ENCODE measurements at regions of chr1 and their contacts with region 1.

Region 1: DNA sequence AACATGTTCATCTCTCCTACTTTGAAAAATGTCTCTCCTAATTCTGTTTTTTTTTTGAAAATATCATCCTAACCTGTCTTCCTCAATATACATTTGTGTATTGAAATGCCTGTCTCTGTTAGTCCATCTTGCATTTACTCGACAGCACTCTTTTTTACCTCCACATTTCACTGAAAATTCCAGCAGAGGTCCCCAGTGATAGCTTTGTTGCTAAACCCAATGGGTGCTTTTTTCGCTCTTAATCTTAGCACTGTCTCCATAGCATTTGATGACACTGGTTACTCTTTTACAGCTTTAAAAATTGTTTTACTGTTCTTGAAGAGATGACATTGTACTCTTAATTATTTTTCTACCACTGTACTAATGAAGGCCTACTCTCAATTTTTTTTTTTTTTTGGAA is 10.8 kb downstream of the OSBPL9 start:
- DNase-seq: no peak
- ATAC-seq: peak; percentile 72
- H3K4me3 ChIP-seq: no peak overlapping the region
- H3K27ac ChIP-seq: no peak overlapping the region
- H3K4me1 ChIP-seq: no peaks in the 10 kb centered on the region
- H3K27me3 ChIP-seq: no peaks in the 10 kb centered on the region
- CTCF ChIP-seq: peak; percentile 35 to 55 (median 37); a peak in 4 of 6 replicates
- EP300 ChIP-seq: no peak
- POLR2A ChIP-seq: no peak
- RAD21 ChIP-seq: peak; percentile 80

Region 2: GRCh38 chr1:51526248-51526647 is 101.4 kb before region 1 on chr1:
- CTCF ChIA-PET with region 1: no interaction called
- POLR2A ChIA-PET with region 1: no interaction called
- RAD21 ChIA-PET with region 1: no interaction called
- SMC1A ChIA-PET with region 1: no interaction called
- in situ Hi-C with region 1: no loop called
- intact Hi-C with region 1: no loop called
- DNase-seq: no peak
- ATAC-seq: peak; percentile 93
- H3K4me3 ChIP-seq: no peak overlapping the region
- H3K27ac ChIP-seq: 0 out of 2 replicates have a peak overlapping the region, but pooled peaks have one; percentile 26
- H3K4me1 ChIP-seq: no peaks in the 10 kb centered on the region
- H3K27me3 ChIP-seq: no peaks in the 10 kb centered on the region
- CTCF ChIP-seq: no peak
- EP300 ChIP-seq: no peak
- POLR2A ChIP-seq: no peak
- RAD21 ChIP-seq: 0 out of 2 replicates have a peak, but pooled peaks have one; percentile 1

Region 3: GRCh38 chr1:51639694-51640093 is 12.0 kb after region 1 on chr1:
- CTCF ChIA-PET with region 1: interaction called, 10 read pairs
- POLR2A ChIA-PET with region 1: no interaction called
- RAD21 ChIA-PET with region 1: interaction called, 6 read pairs
- SMC1A ChIA-PET with region 1: interaction called, 4 read pairs
- in situ Hi-C with region 1: no loop called
- intact Hi-C with region 1: no loop called
- DNase-seq: no peak
- ATAC-seq: no peak
- H3K4me3 ChIP-seq: no peak overlapping the region
- H3K27ac ChIP-seq: no peak overlapping the region
- H3K4me1 ChIP-seq: no peaks in the 10 kb centered on the region
- H3K27me3 ChIP-seq: no peaks in the 10 kb centered on the region
- CTCF ChIP-seq: no peak
- EP300 ChIP-seq: no peak
- POLR2A ChIP-seq: no peak
- RAD21 ChIP-seq: no peak

Region 4: GRCh38 chr1:51664412-51665240 is 36.9 kb after region 1 on chr1:
- CTCF ChIA-PET with region 1: no interaction called
- POLR2A ChIA-PET with region 1: no interaction called
- RAD21 ChIA-PET with region 1: no interaction called
- SMC1A ChIA-PET with region 1: no interaction called
- in situ Hi-C with region 1: no loop called
- intact Hi-C with region 1: no loop called
- DNase-seq: no peak
- ATAC-seq: no peak
- H3K4me3 ChIP-seq: no peak overlapping the region
- H3K27ac ChIP-seq: no peak overlapping the region
- H3K4me1 ChIP-seq: no peaks in the 10 kb centered on the region
- H3K27me3 ChIP-seq: no peaks in the 10 kb centered on the region
- CTCF ChIP-seq: no peak
- EP300 ChIP-seq: no peak
- POLR2A ChIP-seq: no peak
- RAD21 ChIP-seq: no peak

Region 5: GRCh38 chr1:51960262-51960661 is 332.6 kb after region 1 on chr1:
- CTCF ChIA-PET with region 1: no interaction called
- POLR2A ChIA-PET with region 1: no interaction called
- RAD21 ChIA-PET with region 1: no interaction called
- SMC1A ChIA-PET with region 1: no interaction called
- in situ Hi-C with region 1: no loop called
- intact Hi-C with region 1: no loop called
- DNase-seq: no peak
- ATAC-seq: peak; percentile 7; the same call in 2 of the 3 replicates
- H3K4me3 ChIP-seq: no peak overlapping the region
- H3K27ac ChIP-seq: no peak overlapping the region
- H3K4me1 ChIP-seq: peaks cover 43% of the 10 kb centered on the region
- H3K27me3 ChIP-seq: no peaks in the 10 kb centered on the region
- CTCF ChIP-seq: no peak
- EP300 ChIP-seq: peak in 1 of 2 experiments; percentile 37; a peak in 1 of 4 replicates
- POLR2A ChIP-seq: no peak
- RAD21 ChIP-seq: no peak